Natural killer cell (primary cell): ENCODE measurements at regions of chr3 and their contacts with region 1.

Region 1: GRCh38 chr3:16290007-16290826 is 25.2 kb downstream of the OXNAD1 start:
- DNase-seq: peak in 1 of 2 donors; percentile 82
- ATAC-seq: peak in 2 of 3 donors; percentile 24 to 33
- H3K4me3 ChIP-seq: no peak overlapping the region
- H3K4me3 Mint-ChIP-seq: peak overlapping the region; percentile 85
- H3K27ac ChIP-seq: peak overlapping the region; percentile 81
- H3K27ac Mint-ChIP-seq: peak overlapping the region; percentile 87 to 90
- H3K4me1 ChIP-seq: peaks cover 47% of the 10 kb centered on the region
- H3K4me1 Mint-ChIP-seq: peaks cover 67 to 86% of the 10 kb centered on the region in 2 donors
- H3K27me3 ChIP-seq: no peaks in the 10 kb centered on the region
- H3K27me3 Mint-ChIP-seq: no peaks in the 10 kb centered on the region
- CTCF ChIP-seq: peak; percentile 93

Region 2: DNA sequence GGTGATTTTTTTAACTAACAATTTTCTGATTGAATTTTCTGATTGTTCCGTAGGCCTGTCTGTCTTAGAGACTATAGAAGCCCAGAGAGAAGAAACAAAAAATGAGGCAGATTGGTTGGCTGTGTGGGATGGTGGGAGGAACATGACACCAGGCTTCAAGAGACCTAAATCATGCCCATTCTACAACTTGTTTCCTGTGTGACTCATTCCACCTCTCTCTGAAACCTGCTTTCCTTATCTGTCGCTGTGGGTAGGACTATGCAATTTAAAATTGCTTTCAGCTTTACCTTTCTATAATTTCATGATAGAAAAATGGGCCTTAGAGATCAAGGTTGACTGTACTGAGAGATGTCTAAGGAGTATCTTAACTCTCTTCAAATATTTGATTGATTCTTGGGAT is 19.3 kb after region 1 on chr3:
- intact Hi-C with region 1: loop called (anchors 2 kb)
- DNase-seq: peak in 1 of 2 donors; percentile 84
- ATAC-seq: peak; percentile 74 to 82 (median 76)
- H3K4me3 ChIP-seq: no peak overlapping the region
- H3K4me3 Mint-ChIP-seq: peak overlapping the region; percentile 62
- H3K27ac ChIP-seq: peak overlapping the region; percentile 55
- H3K27ac Mint-ChIP-seq: peak overlapping the region; percentile 82 to 86
- H3K4me1 ChIP-seq: peaks cover 57% of the 10 kb centered on the region
- H3K4me1 Mint-ChIP-seq: peaks cover 70 to 82% of the 10 kb centered on the region in 2 donors
- H3K27me3 ChIP-seq: no peaks in the 10 kb centered on the region
- H3K27me3 Mint-ChIP-seq: no peaks in the 10 kb centered on the region
- CTCF ChIP-seq: no peak

Region 3: GRCh38 chr3:16338999-16339398 is 48.8 kb after region 1 on chr3:
- intact Hi-C with region 1: loop called (anchors 2 kb)
- DNase-seq: peak; percentile 33 to 68
- ATAC-seq: peak; percentile 78 to 82 (median 79)
- H3K4me3 ChIP-seq: no peak overlapping the region
- H3K4me3 Mint-ChIP-seq: peak overlapping the region; percentile 78
- H3K27ac ChIP-seq: peak overlapping the region; percentile 85
- H3K27ac Mint-ChIP-seq: peak overlapping the region; percentile 93
- H3K4me1 ChIP-seq: peaks cover 30% of the 10 kb centered on the region
- H3K4me1 Mint-ChIP-seq: peaks cover 61% of the 10 kb centered on the region in 2 donors
- H3K27me3 ChIP-seq: no peaks in the 10 kb centered on the region
- H3K27me3 Mint-ChIP-seq: no peaks in the 10 kb centered on the region
- CTCF ChIP-seq: no peak

Region 4: GRCh38 chr3:16550676-16551341 is 260.6 kb after region 1 on chr3:
- intact Hi-C with region 1: loop called (anchors 1 kb)
- DNase-seq: peak; percentile 56 to 91
- ATAC-seq: peak; percentile 86 to 90 (median 88)
- H3K4me3 ChIP-seq: no peak overlapping the region
- H3K4me3 Mint-ChIP-seq: peak overlapping the region; percentile 40
- H3K27ac ChIP-seq: no peak overlapping the region
- H3K27ac Mint-ChIP-seq: peak overlapping the region; percentile 31 to 69
- H3K4me1 ChIP-seq: peaks cover 17% of the 10 kb centered on the region
- H3K4me1 Mint-ChIP-seq: peaks cover 34 to 40% of the 10 kb centered on the region in 2 donors
- H3K27me3 ChIP-seq: no peaks in the 10 kb centered on the region
- H3K27me3 Mint-ChIP-seq: peaks cover 0 to 9% of the 10 kb centered on the region in 2 donors
- CTCF ChIP-seq: peak; percentile 93